ENCODE measurements at regions of chr22 and their contacts with region 1.

Region 1: DNA sequence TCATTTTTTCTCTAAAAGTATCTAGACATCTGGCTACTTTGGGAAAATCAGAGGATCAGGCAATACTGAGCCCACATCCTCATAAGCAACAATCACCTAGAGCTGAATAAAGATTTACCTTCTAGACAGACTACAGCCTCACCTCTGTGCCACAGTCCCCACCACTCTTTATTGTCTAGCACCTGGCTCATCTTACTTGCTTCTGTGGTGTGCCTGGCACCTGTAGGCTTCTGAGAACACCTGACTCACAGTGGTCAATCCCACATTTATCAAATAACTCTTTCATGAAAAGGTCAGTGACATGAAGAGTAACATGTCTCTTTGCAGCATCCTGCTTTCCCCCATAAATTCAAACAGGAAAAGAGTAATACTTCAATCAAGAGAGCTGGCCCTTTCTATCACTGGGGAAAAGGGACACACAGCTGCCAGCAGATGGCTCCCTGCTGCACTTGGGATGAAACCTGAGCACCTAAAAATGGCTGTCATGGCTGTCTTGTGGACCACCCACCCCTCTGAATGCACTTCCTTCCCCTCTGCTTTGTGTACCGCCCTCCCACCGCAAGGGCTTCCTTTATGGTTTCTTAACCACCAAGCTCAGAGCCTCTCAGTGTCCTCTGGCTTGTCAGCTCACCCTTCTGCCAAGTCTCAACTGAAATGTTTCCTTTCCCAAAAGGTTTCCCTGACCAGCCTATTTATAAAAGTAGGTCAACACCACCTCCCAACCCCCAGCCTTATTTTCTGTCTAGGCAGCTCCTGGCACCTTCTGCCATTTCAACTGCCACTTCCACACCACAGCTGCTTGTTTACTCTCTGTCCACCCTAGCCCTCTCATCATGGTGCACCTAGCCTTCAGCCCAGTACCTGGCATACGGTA is 9.3 kb downstream of the TFIP11 start:
- DNase-seq: peak; percentile 51 to 79 (median 76)
- H3K4me3 ChIP-seq: no peak overlapping the region
- H3K4me3 Mint-ChIP-seq: peak overlapping the region; percentile 18 to 75 (median 62)
- H3K27ac ChIP-seq: peak overlapping the region; percentile 27
- H3K27ac Mint-ChIP-seq: peak overlapping the region; percentile 66 to 94 (median 88)
- H3K4me1 ChIP-seq: peaks cover 20% of the 10 kb centered on the region
- H3K4me1 Mint-ChIP-seq: peaks cover 27 to 31% (median 28%) of the 10 kb centered on the region in 3 donors
- H3K27me3 ChIP-seq: no peaks in the 10 kb centered on the region
- H3K27me3 Mint-ChIP-seq: no peaks in the 10 kb centered on the region

Region 2: GRCh38 chr22:26302726-26303125 is 200.2 kb before region 1 on chr22:
- CTCF ChIA-PET with region 1: no interaction called
- POLR2A ChIA-PET with region 1: no interaction called
- DNase-seq: no peak
- H3K4me3 ChIP-seq: no peak overlapping the region
- H3K4me3 Mint-ChIP-seq: no peak overlapping the region
- H3K27ac ChIP-seq: no peak overlapping the region
- H3K27ac Mint-ChIP-seq: no peak overlapping the region
- H3K4me1 ChIP-seq: no peaks in the 10 kb centered on the region
- H3K4me1 Mint-ChIP-seq: no peaks in the 10 kb centered on the region
- H3K27me3 ChIP-seq: peaks cover 6% of the 10 kb centered on the region
- H3K27me3 Mint-ChIP-seq: peaks cover 11 to 51% of the 10 kb centered on the region in 2 donors

Region 3: GRCh38 chr22:26483439-26484359 is 19.2 kb before region 1 on chr22 and contains the starts of genes HPS4 and SRRD:
- CTCF ChIA-PET with region 1: interaction called, 9 read pairs
- POLR2A ChIA-PET with region 1: interaction called, 10 read pairs
- DNase-seq: peak; percentile 90 to 95 (median 93)
- H3K4me3 ChIP-seq: peak within 1 kb of the TSS; percentile 53
- H3K4me3 Mint-ChIP-seq: peak within 1 kb of the TSS; percentile 81 to 98 (median 93)
- H3K27ac ChIP-seq: peak within 1 kb of the TSS; percentile 93
- H3K27ac Mint-ChIP-seq: peak within 1 kb of the TSS; percentile 93 to 99 (median 99)
- H3K4me1 ChIP-seq: peaks cover 56% of the 10 kb centered on the region
- H3K4me1 Mint-ChIP-seq: peaks cover 63 to 75% (median 73%) of the 10 kb centered on the region in 3 donors
- H3K27me3 ChIP-seq: no peaks in the 10 kb centered on the region
- H3K27me3 Mint-ChIP-seq: no peaks in the 10 kb centered on the region
- total RNA-seq, gene HPS4: 36.7 to 36.8 TPM
- total RNA-seq, gene SRRD: 32.8 to 33.3 TPM

Region 4: DNA sequence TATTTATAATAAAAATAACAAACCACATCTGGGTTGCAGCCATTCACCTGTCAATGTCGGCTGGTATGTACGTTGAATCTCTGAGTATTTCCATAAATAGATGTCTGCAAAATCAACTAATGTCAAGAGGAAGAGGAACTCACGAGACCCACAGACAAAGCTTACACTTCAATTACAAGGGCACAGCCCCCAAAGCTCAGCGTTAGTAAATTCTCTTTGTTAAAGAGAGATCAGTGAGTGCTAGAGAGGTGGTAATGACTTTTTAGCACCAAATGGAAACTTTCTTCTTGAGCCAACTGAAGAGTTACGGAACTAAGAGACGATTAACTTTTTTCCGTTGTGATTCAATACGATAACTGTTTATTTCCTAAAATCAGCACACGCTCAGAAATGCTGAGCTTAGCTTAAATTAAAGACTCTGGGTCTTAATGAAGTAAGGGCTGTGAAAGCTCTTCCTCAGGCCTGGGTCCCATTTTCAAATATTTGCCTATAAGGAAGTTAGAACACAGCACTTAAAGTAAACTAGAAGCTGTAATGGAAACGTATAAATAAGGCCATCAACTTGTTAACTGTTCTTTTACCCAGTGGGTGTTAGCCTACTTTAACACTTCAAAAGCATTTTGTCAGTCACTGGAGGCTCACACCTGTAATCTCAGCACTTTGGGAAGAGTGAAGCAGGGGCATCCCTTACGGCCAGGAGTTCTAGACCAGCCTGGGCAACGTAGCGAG is 32.1 kb after region 1 on chr22:
- CTCF ChIA-PET with region 1: interaction called, 10 read pairs
- POLR2A ChIA-PET with region 1: no interaction called
- DNase-seq: no peak
- H3K4me3 ChIP-seq: no peak overlapping the region
- H3K4me3 Mint-ChIP-seq: no peak overlapping the region
- H3K27ac ChIP-seq: no peak overlapping the region
- H3K27ac Mint-ChIP-seq: peak overlapping the region in 7 of 8 donors; percentile 32 to 76 (median 61)
- H3K4me1 ChIP-seq: no peaks in the 10 kb centered on the region
- H3K4me1 Mint-ChIP-seq: peaks cover 16 to 33% (median 32%) of the 10 kb centered on the region in 3 donors
- H3K27me3 ChIP-seq: no peaks in the 10 kb centered on the region
- H3K27me3 Mint-ChIP-seq: no peaks in the 10 kb centered on the region

Region 5: DNA sequence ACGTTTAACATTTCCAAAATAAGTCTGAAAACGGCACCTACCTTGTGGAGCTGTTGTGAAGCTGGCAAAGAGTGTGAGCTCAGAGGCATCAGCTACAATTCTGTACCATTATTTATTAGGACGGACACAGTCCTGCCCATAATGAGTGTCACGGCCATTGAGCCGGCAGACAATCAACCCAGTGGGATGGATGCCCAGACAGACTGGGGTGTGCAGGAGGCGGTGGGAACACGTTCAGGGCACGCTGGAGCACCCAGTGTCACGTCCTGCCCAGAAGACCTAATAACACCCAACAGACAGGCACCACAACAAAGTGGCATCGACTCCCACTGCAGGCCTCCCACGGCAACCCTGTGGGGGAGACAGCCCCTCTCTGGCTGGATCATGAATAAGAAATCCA is 52.6 kb after region 1 on chr22:
- CTCF ChIA-PET with region 1: no interaction called
- POLR2A ChIA-PET with region 1: no interaction called
- DNase-seq: no peak
- H3K4me3 ChIP-seq: no peak overlapping the region
- H3K4me3 Mint-ChIP-seq: no peak overlapping the region
- H3K27ac ChIP-seq: no peak overlapping the region
- H3K27ac Mint-ChIP-seq: peak overlapping the region in 2 of 8 donors; percentile 30 to 45
- H3K4me1 ChIP-seq: no peaks in the 10 kb centered on the region
- H3K4me1 Mint-ChIP-seq: peaks cover 50 to 90% (median 64%) of the 10 kb centered on the region in 3 donors
- H3K27me3 ChIP-seq: no peaks in the 10 kb centered on the region
- H3K27me3 Mint-ChIP-seq: no peaks in the 10 kb centered on the region

Region 6: GRCh38 chr22:26665813-26666231 is 162.9 kb after region 1 on chr22:
- CTCF ChIA-PET with region 1: interaction called, 33 read pairs
- POLR2A ChIA-PET with region 1: no interaction called
- DNase-seq: no peak
- H3K4me3 ChIP-seq: no peak overlapping the region
- H3K4me3 Mint-ChIP-seq: peak overlapping the region in 2 of 7 donors; percentile 57 to 81
- H3K27ac ChIP-seq: no peak overlapping the region
- H3K27ac Mint-ChIP-seq: peak overlapping the region; percentile 31 to 98 (median 94)
- H3K4me1 ChIP-seq: peaks cover 39% of the 10 kb centered on the region
- H3K4me1 Mint-ChIP-seq: peaks cover 54 to 85% (median 56%) of the 10 kb centered on the region in 3 donors
- H3K27me3 ChIP-seq: no peaks in the 10 kb centered on the region
- H3K27me3 Mint-ChIP-seq: no peaks in the 10 kb centered on the region

Region 7: DNA sequence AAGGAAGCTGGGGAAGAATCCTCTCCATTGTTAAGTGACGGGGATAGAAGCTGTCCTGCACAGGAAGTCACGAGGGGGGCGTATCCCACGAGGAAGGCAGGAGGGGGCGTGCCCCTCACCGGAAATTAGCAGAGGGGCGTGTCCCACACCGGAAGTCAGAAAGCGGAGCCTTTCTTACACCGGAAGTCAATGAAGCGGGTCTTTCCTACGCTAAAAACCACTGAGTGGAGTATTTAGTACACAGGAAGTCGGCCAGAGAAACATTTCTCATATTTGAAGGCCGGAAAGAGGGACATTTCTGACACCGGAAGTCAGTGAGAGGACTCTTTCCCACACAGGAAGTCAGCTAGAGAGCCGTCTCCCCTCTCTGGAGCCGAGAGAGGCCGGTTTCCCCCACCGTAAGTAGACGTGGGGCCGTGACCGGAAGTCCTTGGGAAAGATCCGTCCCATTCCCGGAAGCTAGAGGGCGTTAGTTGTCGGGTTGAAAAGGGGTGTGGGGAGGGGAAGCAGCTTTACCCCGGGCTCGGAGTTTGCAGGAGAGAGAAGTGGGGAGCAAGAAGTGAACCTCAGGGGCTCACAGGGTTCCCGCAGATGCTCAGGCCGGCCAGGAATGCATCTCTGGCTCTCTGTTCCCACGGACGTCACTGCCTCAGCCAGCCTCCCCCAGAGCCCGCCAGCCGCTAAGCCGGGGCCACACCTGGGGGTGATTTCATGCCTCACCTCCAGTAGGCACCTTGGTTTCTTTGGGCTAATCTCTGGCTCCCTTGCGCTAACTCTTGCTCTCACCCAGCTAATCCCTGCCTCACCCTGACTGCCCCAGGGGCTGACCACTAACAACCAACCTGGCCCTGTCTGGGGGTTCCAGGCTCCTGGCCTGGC is 169.9 kb after region 1 on chr22:
- CTCF ChIA-PET with region 1: interaction called, 33 read pairs
- POLR2A ChIA-PET with region 1: interaction called, 12 read pairs
- DNase-seq: peak; percentile 86 to 96 (median 92)
- H3K4me3 ChIP-seq: peak overlapping the region; percentile 94
- H3K4me3 Mint-ChIP-seq: peak overlapping the region; percentile 95 to 98 (median 98)
- H3K27ac ChIP-seq: peak overlapping the region; percentile 91
- H3K27ac Mint-ChIP-seq: peak overlapping the region; percentile 93 to 100 (median 98)
- H3K4me1 ChIP-seq: peaks cover 83% of the 10 kb centered on the region
- H3K4me1 Mint-ChIP-seq: peaks cover 81 to 94% (median 87%) of the 10 kb centered on the region in 3 donors
- H3K27me3 ChIP-seq: no peaks in the 10 kb centered on the region
- H3K27me3 Mint-ChIP-seq: no peaks in the 10 kb centered on the region